ENCODE measurements at regions of chr2 and their contacts with region 1.

Region 1: DNA sequence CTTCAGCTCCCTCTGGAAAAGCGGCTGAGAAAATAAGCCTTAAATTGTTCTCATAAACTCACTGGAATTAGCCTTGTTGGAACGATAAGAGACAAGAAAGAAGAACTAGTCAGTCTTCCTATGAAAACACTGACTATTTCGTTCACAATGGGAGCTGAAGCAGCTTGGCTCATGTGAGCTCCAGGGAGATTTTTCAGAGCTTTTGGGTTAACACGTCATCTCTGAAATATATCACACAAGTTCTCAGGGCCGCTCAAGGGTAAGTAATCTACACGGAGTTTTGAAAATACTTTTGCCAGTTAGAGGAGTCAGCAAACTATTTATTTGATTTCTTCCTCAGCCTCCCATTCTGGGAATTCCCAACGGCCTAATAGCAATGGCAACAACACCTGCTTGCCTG is 316.2 kb upstream of the MGAT5 start:
- H3K4me3 ChIP-seq: no peak overlapping the region
- H3K27ac ChIP-seq: no peak overlapping the region
- H3K4me1 ChIP-seq: no peaks in the 10 kb centered on the region
- CTCF ChIP-seq: no peak

Region 2: DNA sequence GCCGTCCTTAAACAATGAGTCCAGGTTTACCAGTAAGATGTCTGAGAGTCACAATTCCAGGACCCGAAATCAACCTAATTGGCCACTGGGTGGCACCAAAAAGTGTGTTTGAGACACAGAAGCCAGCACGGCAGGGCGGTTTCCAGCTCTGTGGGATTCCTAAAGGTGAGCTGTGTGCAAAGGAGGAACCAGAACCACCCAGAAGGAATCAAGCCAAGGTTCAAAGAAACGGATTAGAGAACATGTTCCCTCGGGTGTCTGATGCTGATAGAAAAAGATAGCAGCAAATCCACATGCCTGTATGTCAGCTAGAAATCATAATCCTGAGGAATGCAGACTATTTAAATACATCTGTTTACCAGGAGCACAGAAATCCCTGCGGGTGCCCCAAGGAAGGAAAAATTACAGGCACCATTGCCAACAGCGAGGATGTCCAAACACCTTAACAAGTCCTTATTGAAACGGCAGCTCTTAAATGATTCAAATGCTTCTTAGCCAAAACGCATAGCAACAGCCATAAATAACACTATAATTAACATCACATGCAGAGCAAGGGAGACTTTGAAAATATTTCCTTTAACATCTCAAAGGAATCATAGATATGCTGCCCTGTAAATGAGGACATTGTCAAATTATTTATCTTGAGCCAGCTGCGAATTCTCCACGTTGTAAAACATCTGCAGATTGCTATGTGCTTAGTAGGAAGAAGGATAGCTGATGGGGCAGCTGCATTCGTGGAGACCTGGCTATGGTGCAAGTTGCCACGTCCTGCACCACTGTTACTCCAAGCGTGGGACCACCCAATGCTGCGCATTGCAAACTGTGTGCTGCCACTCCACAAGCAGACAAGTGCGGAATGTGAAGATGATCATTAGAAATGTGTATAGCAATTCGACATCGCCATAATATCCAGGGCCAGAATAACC is 50.7 kb before region 1 on chr2:
- CTCF ChIA-PET with region 1: interaction called, 10 read pairs
- POLR2A ChIA-PET with region 1: no interaction called
- H3K4me3 ChIP-seq: no peak overlapping the region
- H3K27ac ChIP-seq: no peak overlapping the region
- H3K4me1 ChIP-seq: no peaks in the 10 kb centered on the region; the same call in 1 of the 2 replicates
- CTCF ChIP-seq: peak; percentile 43; the same call in 1 of the 2 replicates

Region 3: DNA sequence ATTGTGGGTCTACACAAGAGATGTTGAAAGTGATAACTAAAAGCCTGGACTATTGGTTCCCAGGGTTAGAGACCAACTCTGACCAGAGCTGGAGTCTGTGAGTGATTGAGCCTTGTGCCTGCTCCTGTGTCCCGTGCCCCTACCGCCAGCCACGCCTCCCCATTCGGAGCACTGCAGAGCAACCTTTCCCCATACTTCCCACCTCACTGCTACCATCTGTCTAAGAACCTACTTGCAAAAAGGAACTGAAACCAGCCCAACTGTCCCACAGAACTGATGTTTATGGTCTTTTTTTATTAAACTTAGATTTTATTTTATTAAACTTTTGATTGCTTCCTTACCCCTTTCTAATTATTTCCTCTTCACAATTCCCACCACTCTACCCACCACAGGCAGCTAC is 15.9 kb after region 1 on chr2:
- CTCF ChIA-PET with region 1: no interaction called
- POLR2A ChIA-PET with region 1: no interaction called
- H3K4me3 ChIP-seq: no peak overlapping the region
- H3K27ac ChIP-seq: no peak overlapping the region
- H3K4me1 ChIP-seq: no peaks in the 10 kb centered on the region
- CTCF ChIP-seq: no peak

Region 4: GRCh38 chr2:134087371-134087921 is 149.8 kb after region 1 on chr2:
- CTCF ChIA-PET with region 1: no interaction called
- POLR2A ChIA-PET with region 1: no interaction called
- H3K4me3 ChIP-seq: no peak overlapping the region
- H3K27ac ChIP-seq: no peak overlapping the region
- H3K4me1 ChIP-seq: no peaks in the 10 kb centered on the region
- CTCF ChIP-seq: no peak